ENCODE measurements at regions of chrX and their contacts with region 1.

Region 1: DNA sequence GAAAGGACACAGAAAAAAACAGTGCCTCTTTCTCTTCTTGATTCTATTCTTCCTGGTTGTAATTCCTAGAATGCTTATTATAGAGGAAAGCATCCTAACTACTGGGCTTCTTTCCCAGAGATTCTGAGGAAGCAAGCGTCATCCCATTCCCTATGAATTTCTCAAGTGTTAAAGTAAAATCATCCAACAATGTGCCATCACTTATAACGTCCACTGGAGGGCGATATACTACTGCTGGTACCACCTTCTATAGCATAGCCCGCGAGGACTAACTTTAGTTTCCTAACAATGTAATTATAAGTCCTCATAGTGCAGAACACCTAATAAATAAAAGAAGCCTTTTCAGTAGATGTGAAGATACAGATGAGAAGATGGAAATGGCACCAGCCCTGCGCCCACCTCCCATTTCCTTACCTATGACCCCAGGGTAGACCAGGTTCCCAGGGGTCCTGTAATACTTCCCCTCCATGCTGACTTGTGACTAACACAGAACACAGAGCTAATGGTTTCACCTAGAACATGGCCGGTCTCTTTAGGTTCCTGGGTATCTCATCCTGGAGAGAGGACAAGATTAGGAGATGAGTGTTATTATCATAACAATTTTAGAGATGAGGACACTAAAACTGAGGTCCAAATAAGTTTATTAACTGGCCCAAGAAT is 4.2 kb downstream of the CENPVL3 start:
- DNase-seq: peak; percentile 13
- H3K4me3 ChIP-seq: no peak overlapping the region
- H3K27ac ChIP-seq: no peak overlapping the region
- H3K4me1 ChIP-seq: no peaks in the 10 kb centered on the region
- H3K27me3 ChIP-seq: peaks cover 9 to 13% of the 10 kb centered on the region in 2 experiments
- CTCF ChIP-seq: peak; percentile 29 to 38
- POLR2A ChIP-seq: no peak

Region 2: GRCh38 chrX:51825436-51825835 is 211.0 kb after region 1 on chrX:
- CTCF ChIA-PET with region 1: no interaction called
- POLR2A ChIA-PET with region 1: no interaction called
- dilution Hi-C with region 1: no loop called
- intact Hi-C with region 1: no loop called
- DNase-seq: no peak
- H3K4me3 ChIP-seq: no peak overlapping the region
- H3K27ac ChIP-seq: no peak overlapping the region
- H3K4me1 ChIP-seq: no peaks in the 10 kb centered on the region
- H3K27me3 ChIP-seq: no peaks in the 10 kb centered on the region
- CTCF ChIP-seq: no peak
- POLR2A ChIP-seq: no peak

Region 3: GRCh38 chrX:51860679-51861078 is 246.2 kb after region 1 on chrX:
- CTCF ChIA-PET with region 1: interaction called, 3 read pairs
- POLR2A ChIA-PET with region 1: no interaction called
- dilution Hi-C with region 1: no loop called
- intact Hi-C with region 1: loop called (anchors 1 kb)
- DNase-seq: peak; percentile 22
- H3K4me3 ChIP-seq: no peak overlapping the region
- H3K27ac ChIP-seq: no peak overlapping the region
- H3K4me1 ChIP-seq: no peaks in the 10 kb centered on the region
- H3K27me3 ChIP-seq: no peaks in the 10 kb centered on the region
- CTCF ChIP-seq: peak; percentile 17 to 63
- POLR2A ChIP-seq: no peak